ENCODE measurements at regions of chr5 and their contacts with region 1.

Region 1: DNA sequence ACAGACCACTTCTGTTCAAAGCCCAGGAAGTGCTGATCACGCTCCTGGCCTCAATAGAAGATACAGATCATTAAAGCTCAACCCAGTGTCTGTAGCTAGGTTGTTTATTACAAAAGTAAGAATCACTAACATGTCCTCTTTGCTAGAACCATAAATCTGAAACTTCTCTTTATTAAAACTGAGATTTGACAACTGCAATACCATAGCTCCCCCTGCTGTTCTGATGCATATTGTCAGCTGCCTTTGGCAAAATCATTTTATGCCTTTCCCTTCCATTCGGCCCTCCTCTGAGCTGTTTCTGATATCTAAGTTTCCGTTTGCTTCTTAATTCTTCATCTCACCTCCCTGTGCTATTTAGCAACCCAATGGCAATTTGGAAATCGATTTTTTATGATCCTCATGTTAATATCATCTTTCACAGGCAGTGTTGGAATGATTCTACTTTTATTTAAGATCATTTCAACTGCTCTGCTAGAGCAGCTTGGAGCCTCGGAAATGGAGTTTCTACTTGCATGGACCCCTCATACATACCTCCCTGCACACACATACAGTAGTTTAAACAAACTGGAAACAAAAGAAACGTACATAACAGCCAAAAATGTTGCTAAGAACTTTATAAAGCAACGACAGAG is 998.8 kb downstream of the MAT2B start:
- DNase-seq: no peak
- H3K4me3 ChIP-seq: no peak overlapping the region
- H3K27me3 ChIP-seq: no peaks in the 10 kb centered on the region
- CTCF ChIP-seq: peak; percentile 67

Region 2: GRCh38 chr5:163564321-163564938 is 939.8 kb before region 1 on chr5:
- CTCF ChIA-PET with region 1: interaction called, 55 read pairs
- POLR2A ChIA-PET with region 1: no interaction called
- DNase-seq: no peak
- H3K4me3 ChIP-seq: no peak overlapping the region
- H3K27me3 ChIP-seq: peaks cover 2% of the 10 kb centered on the region
- CTCF ChIP-seq: peak; percentile 81

Region 3: GRCh38 chr5:163695830-163696578 is 808.3 kb before region 1 on chr5:
- CTCF ChIA-PET with region 1: interaction called, 47 read pairs
- POLR2A ChIA-PET with region 1: no interaction called
- DNase-seq: peak; percentile 16
- H3K4me3 ChIP-seq: no peak overlapping the region
- H3K27me3 ChIP-seq: no peaks in the 10 kb centered on the region
- CTCF ChIP-seq: peak; percentile 77

Measured in BJ (cell line).